Activated CD4-positive, alpha-beta memory T cell treated with anti-CD3 and anti-CD28 coated beads, Interleukin-2, amount 10 ng/mL, durations not matched to agents 7 days and 5 days (primary cell): ENCODE measurements at regions of chr12 and their contacts with region 1.

Region 1: GRCh38 chr12:49740930-49741881 is at the start of gene TMBIM6:
- DNase-seq: peak; percentile 99
- H3K4me3 Mint-ChIP-seq: peak within 1 kb of the TSS; percentile 96
- H3K27ac Mint-ChIP-seq: peak within 1 kb of the TSS; percentile 100
- H3K4me1 Mint-ChIP-seq: peaks cover 37% of the 10 kb centered on the region
- H3K27me3 Mint-ChIP-seq: peaks cover 1% of the 10 kb centered on the region
- total RNA-seq, gene TMBIM6: 600 to 613 TPM

Region 2: GRCh38 chr12:49264738-49265515 is 476.3 kb before region 1 on chr12 and contains the start of gene TUBA1C:
- CTCF ChIA-PET with region 1: interaction called, 4 read pairs
- POLR2A ChIA-PET with region 1: interaction called, 15 read pairs
- DNase-seq: peak; percentile 93
- H3K4me3 Mint-ChIP-seq: peak within 1 kb of the TSS; percentile 95
- H3K27ac Mint-ChIP-seq: peak within 1 kb of the TSS; percentile 95
- H3K4me1 Mint-ChIP-seq: peaks cover 56% of the 10 kb centered on the region
- H3K27me3 Mint-ChIP-seq: no peaks in the 10 kb centered on the region
- total RNA-seq, gene TUBA1C: 250 to 262 TPM

Region 3: DNA sequence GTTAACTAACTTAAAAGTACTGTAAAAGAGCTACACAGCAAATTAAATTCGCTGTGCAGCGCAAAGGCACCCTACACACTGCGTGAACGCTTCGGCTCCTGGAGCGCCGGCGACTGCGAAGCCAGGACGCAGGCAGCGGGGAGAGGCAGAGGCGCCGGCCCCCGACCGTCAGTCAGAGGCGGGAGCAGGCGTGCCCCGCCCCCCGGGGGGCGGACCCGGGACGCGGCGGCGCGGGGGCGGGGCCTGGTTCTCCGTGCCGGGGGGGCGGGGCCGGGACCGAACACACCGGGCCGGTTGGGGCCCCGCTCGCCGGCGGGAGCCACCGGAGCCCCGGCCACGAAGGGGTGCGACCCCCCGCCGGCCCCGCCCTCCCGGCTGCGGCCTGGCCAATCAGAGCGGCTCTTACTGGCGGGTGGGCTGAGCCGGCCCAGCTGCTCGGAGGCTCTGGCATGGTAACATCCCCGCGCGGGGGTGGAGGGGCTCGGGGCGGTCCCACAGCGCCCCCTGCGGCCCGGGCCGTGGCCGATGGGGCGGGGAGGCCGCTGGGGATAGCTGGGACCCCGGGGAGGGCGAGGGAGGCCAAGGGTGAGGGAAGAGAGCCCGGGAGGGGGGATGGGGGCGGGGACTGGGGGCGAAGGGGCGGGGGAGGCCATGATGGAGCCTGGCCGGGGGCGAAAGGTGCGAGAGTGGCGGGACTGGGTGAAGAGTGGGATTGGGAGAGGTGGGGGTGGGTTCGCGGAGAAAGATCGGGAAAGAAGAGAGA is 117.9 kb before region 1 on chr12 and contains the start of gene PRPF40B:
- CTCF ChIA-PET with region 1: interaction called, 9 read pairs
- POLR2A ChIA-PET with region 1: interaction called, 18 read pairs
- DNase-seq: peak; percentile 86
- H3K4me3 Mint-ChIP-seq: peak within 1 kb of the TSS; percentile 77
- H3K27ac Mint-ChIP-seq: peak within 1 kb of the TSS; percentile 81
- H3K4me1 Mint-ChIP-seq: peaks cover 27% of the 10 kb centered on the region
- H3K27me3 Mint-ChIP-seq: peaks cover 34% of the 10 kb centered on the region
- total RNA-seq, gene PRPF40B: 8.0 to 8.7 TPM

Region 4: GRCh38 chr12:49662998-49663843 is 78.0 kb before region 1 on chr12:
- CTCF ChIA-PET with region 1: interaction called, 6 read pairs
- POLR2A ChIA-PET with region 1: interaction called, 19 read pairs
- DNase-seq: peak; percentile 82
- H3K4me3 Mint-ChIP-seq: peak overlapping the region; percentile 56
- H3K27ac Mint-ChIP-seq: peak overlapping the region; percentile 95
- H3K4me1 Mint-ChIP-seq: peaks cover 60% of the 10 kb centered on the region
- H3K27me3 Mint-ChIP-seq: no peaks in the 10 kb centered on the region

Region 5: DNA sequence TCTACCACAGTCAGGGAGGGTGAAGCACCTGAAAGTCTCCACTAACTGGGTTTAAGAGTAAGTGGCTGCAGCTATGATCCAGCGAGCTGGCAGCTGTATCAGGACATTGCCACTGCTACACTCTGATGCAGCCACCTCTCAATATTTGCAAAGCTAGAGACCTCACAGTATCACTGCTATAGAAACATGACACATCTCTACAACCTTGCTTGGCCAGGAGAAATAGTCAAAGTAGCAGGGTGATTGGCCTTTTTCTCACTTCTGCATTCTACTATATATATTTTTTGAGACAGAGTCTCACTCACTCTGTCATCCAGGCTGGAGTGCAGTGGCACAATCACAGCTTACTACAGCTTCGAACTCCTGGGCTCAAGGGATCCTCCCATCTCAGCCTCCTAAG is 24.7 kb before region 1 on chr12:
- CTCF ChIA-PET with region 1: interaction called, 11 read pairs
- POLR2A ChIA-PET with region 1: interaction called, 10 read pairs
- DNase-seq: no peak
- H3K4me3 Mint-ChIP-seq: no peak overlapping the region
- H3K27ac Mint-ChIP-seq: no peak overlapping the region
- H3K4me1 Mint-ChIP-seq: no peaks in the 10 kb centered on the region
- H3K27me3 Mint-ChIP-seq: peaks cover 44% of the 10 kb centered on the region

Region 6: DNA sequence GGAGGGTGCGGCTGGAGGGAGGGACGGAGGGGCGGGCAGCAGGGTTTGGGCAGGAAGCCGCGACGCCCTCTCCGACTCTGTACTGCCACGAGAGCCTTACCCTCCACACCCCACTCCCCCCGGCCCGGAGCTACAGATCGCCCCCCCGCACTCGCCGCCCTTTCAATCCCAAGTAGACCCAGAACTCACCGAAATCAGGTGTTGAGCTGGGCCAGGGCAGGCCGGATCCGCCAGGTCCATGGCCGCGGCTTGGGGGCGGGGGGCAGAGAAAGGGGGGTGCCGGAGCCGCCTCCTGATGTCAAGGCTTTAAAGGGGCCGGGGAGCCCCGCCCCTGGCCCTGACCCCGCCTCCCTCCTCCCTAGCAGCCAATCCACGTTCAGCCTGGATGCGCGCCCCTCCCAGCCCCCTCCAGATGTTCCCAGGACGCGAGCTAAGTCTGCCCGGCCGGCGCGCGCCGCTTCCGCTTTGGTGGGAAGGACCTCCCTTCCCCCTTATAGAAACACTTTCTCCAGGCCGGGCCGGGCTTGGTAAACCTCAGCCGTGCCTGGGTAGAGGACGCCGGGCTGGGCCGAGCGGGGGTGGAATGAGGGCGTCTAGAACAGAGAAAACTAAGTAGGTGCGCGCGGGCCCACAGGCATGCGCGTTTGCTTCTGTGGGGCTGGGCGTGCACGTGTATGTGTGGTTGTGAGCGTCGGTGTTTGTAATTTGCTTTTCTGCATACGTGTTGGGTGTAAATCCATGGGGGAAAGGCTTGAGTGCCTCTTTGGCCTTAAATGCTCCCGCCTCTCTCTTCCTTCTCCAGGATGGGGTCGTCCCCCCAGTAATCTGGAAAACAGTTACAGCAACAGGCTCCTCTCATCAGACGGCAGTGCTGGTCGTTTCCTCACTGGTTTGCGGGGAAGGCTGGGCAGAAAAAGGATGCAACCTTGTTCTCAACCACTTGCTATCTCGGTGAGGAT is 87.2 kb after region 1 on chr12 and contains the start of gene NCKAP5L:
- CTCF ChIA-PET with region 1: interaction called, 4 read pairs
- POLR2A ChIA-PET with region 1: interaction called, 12 read pairs
- DNase-seq: peak; percentile 90
- H3K4me3 Mint-ChIP-seq: peak within 1 kb of the TSS; percentile 79
- H3K27ac Mint-ChIP-seq: peak within 1 kb of the TSS; percentile 26
- H3K4me1 Mint-ChIP-seq: peaks cover 13% of the 10 kb centered on the region
- H3K27me3 Mint-ChIP-seq: peaks cover 32% of the 10 kb centered on the region
- total RNA-seq, gene NCKAP5L: 1.1 to 1.2 TPM

Region 7: DNA sequence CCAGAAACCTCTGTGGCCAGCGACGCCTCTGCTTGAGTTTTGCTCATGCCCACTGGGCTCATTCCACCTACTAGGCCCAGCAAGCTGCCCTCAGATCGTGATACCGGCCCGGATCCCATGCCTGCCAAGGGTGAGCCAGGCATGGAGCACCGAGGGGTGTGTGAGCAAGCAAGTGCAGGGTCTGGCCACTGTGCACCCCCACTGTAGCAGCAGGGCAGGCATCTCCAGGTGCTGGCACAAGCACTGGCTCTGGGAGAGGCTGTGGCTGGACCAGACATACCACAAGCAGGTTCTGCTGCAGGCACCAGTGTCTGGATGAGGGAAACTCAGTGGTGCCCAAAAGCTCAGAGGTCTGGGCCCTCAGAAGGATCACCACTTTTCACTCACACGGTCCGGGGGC is 634.6 kb after region 1 on chr12:
- CTCF ChIA-PET with region 1: no interaction called
- POLR2A ChIA-PET with region 1: no interaction called
- DNase-seq: no peak
- H3K4me3 Mint-ChIP-seq: no peak overlapping the region
- H3K27ac Mint-ChIP-seq: no peak overlapping the region
- H3K4me1 Mint-ChIP-seq: no peaks in the 10 kb centered on the region
- H3K27me3 Mint-ChIP-seq: no peaks in the 10 kb centered on the region